Endothelial cell of umbilical vein (primary cell): ENCODE measurements at regions of chr4 and their contacts with region 1.

Region 1: DNA sequence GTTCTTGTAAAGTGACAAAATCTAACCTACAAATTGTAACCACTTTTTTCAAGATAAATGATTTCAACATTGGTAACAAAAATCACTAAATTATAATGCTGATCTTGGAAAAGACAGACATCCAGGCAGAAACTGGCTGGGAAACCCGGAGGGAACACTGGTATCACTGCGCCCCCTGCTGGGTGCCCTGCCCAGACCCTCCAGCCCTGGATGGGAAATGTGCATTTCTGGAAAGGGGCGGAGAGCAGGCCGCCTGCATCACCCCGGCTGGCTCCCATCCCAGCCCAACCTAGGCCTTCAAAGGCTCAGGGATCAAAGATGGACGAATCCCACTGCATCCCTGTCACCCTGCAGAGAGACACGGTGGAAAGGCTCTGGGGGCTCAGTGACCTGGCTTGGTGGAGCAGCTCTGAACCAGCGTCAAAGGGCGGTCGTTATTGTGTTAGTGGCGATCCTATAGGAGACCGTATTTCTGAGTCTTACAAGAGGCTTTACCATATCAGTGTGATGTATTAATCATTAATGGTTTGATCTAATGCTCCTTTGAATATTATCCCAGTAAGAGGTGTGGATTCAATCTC is 37.3 kb downstream of the ACOX3 start:
- DNase-seq: peak; percentile 80
- H3K4me3 ChIP-seq: no peak overlapping the region
- H3K27ac ChIP-seq: peak overlapping the region; percentile 26
- H3K4me1 ChIP-seq: peaks cover 11% of the 10 kb centered on the region
- H3K27me3 ChIP-seq: no peaks in the 10 kb centered on the region
- CTCF ChIP-seq: peak; percentile 91 to 95
- POLR2A ChIP-seq: no peak

Region 2: DNA sequence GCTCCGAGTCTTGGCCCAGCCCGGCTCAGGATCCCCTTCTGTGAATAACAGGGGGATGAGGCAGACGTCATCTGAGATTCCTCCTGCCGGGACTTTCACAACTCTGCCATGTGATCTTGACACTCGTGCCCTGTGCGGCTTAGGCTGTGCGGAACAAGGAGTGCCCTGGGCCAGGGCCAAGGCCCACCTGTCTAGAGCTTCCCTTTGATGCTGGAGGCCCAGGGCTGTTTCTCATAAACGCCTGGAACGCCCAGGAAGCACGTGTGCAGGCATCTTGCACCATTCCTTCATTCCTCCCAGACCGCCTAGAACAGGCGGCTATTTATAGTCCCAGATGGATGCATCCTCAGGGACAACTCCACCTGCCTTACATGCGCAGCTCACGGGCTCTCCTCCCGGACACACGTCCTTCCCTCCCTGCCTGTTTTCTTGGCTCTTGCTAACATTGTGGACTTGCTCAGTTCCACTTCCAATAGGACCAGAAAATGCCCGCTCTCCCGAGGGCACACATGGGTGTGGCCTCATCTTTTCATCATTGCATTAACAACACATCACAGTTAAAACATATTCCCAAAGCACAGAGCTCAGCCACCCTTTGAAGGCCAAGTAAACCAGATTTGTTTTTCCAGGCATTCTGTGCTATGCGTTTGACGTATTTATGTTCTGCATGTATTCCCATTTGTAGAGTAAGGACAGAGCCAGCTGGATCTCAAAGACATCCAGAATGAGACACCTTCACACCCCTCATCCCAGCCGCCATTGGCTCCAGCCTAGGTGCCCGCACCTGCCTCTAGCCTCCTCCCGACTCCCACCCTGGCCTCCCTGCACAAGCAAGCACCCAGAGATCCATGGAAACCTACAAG is 301.8 kb before region 1 on chr4:
- CTCF ChIA-PET with region 1: no interaction called
- POLR2A ChIA-PET with region 1: no interaction called
- dilution Hi-C with region 1: no loop called
- intact Hi-C with region 1: no loop called
- DNase-seq: no peak
- H3K4me3 ChIP-seq: no peak overlapping the region
- H3K27ac ChIP-seq: no peak overlapping the region
- H3K4me1 ChIP-seq: no peaks in the 10 kb centered on the region
- H3K27me3 ChIP-seq: no peaks in the 10 kb centered on the region
- CTCF ChIP-seq: no peak
- POLR2A ChIP-seq: no peak

Region 3: DNA sequence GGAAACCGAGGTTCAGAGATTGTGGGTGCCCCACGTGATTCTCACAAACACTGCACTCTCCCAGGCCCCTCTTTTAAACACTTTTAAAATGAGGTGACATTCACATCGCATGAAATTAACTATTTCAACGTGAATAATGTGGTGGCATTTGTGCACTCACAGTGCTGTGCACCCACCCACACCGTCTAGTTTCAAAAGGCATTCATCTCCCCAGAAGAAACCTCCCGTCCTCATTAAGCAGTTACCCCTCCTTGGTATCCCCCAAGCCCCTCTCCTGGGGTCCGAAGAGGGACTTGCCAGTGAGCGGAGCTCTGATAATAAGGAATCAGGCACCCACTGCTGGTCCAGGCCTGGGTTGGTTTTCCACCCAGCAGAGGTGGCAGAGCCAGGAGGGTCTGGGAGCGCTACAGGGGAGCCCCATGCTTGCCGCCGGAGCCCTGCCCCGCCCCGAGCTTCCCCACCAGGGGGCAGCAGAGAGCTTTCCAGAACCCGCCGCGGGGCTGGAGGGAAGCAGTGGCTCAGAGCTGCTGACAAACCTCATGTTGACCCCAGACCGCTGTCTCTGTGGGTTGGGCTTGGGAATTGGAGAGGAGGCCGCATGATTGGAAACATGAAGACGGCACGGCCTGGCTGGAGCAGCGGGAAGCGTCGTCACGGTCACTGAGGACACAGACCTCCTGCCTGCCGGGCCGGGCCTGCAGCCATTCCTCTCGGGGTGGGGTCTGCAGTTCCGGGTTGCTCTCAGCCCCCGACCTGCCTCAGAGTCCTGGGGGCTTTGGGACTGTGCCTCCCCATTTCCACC is 161.2 kb before region 1 on chr4:
- CTCF ChIA-PET with region 1: interaction called, 155 read pairs
- POLR2A ChIA-PET with region 1: interaction called, 3 read pairs
- dilution Hi-C with region 1: no loop called
- intact Hi-C with region 1: loop called (anchors 1 kb)
- DNase-seq: peak; percentile 71
- H3K4me3 ChIP-seq: no peak overlapping the region
- H3K27ac ChIP-seq: peak overlapping the region; percentile 36
- H3K4me1 ChIP-seq: no peaks in the 10 kb centered on the region
- H3K27me3 ChIP-seq: no peaks in the 10 kb centered on the region
- CTCF ChIP-seq: peak; percentile 94 to 98
- POLR2A ChIP-seq: no peak

Region 4: GRCh38 chr4:8250227-8250626 is 153.0 kb before region 1 on chr4:
- CTCF ChIA-PET with region 1: interaction called, 155 read pairs
- POLR2A ChIA-PET with region 1: interaction called, 3 read pairs
- dilution Hi-C with region 1: no loop called
- intact Hi-C with region 1: no loop called
- DNase-seq: no peak
- H3K4me3 ChIP-seq: no peak overlapping the region
- H3K27ac ChIP-seq: no peak overlapping the region
- H3K4me1 ChIP-seq: no peaks in the 10 kb centered on the region
- H3K27me3 ChIP-seq: no peaks in the 10 kb centered on the region
- CTCF ChIP-seq: no peak
- POLR2A ChIP-seq: no peak

Region 5: GRCh38 chr4:8274765-8275547 is 128.3 kb before region 1 on chr4:
- CTCF ChIA-PET with region 1: interaction called, 242 read pairs
- POLR2A ChIA-PET with region 1: interaction called, 3 read pairs
- dilution Hi-C with region 1: no loop called
- intact Hi-C with region 1: no loop called
- DNase-seq: no peak
- H3K4me3 ChIP-seq: no peak overlapping the region
- H3K27ac ChIP-seq: no peak overlapping the region
- H3K4me1 ChIP-seq: peaks cover 18% of the 10 kb centered on the region
- H3K27me3 ChIP-seq: no peaks in the 10 kb centered on the region
- CTCF ChIP-seq: no peak
- POLR2A ChIP-seq: no peak

Region 6: GRCh38 chr4:8315435-8316250 is 87.6 kb before region 1 on chr4:
- CTCF ChIA-PET with region 1: interaction called, 11 read pairs
- POLR2A ChIA-PET with region 1: no interaction called
- dilution Hi-C with region 1: no loop called
- intact Hi-C with region 1: loop called (anchors 1 kb)
- DNase-seq: peak; percentile 81
- H3K4me3 ChIP-seq: no peak overlapping the region
- H3K27ac ChIP-seq: no peak overlapping the region
- H3K4me1 ChIP-seq: peaks cover 7% of the 10 kb centered on the region
- H3K27me3 ChIP-seq: peaks cover 1 to 12% of the 10 kb centered on the region in 2 experiments
- CTCF ChIP-seq: no peak
- POLR2A ChIP-seq: no peak

Region 7: GRCh38 chr4:8374851-8375675 is 28.2 kb before region 1 on chr4:
- CTCF ChIA-PET with region 1: interaction called, 10 read pairs
- POLR2A ChIA-PET with region 1: no interaction called
- dilution Hi-C with region 1: no loop called
- intact Hi-C with region 1: no loop called
- DNase-seq: no peak
- H3K4me3 ChIP-seq: no peak overlapping the region
- H3K27ac ChIP-seq: no peak overlapping the region
- H3K4me1 ChIP-seq: no peaks in the 10 kb centered on the region
- H3K27me3 ChIP-seq: no peaks in the 10 kb centered on the region
- CTCF ChIP-seq: no peak
- POLR2A ChIP-seq: no peak

Region 8: GRCh38 chr4:8391972-8392371 is 11.3 kb before region 1 on chr4:
- CTCF ChIA-PET with region 1: interaction called, 40 read pairs
- POLR2A ChIA-PET with region 1: no interaction called
- dilution Hi-C with region 1: no loop called
- intact Hi-C with region 1: loop called (anchors 1 kb)
- DNase-seq: peak; percentile 96
- H3K4me3 ChIP-seq: no peak overlapping the region
- H3K27ac ChIP-seq: peak overlapping the region; percentile 55
- H3K4me1 ChIP-seq: peaks cover 30% of the 10 kb centered on the region
- H3K27me3 ChIP-seq: no peaks in the 10 kb centered on the region
- CTCF ChIP-seq: no peak
- POLR2A ChIP-seq: no peak